Calu3 (cell line): ENCODE measurements at regions of chr4 and their contacts with region 1.

Region 1: GRCh38 chr4:113547487-113548042 is 214.0 kb downstream of the CAMK2D start:
- DNase-seq: peak; percentile 87
- H3K4me3 Mint-ChIP-seq: no peak overlapping the region
- H3K27ac Mint-ChIP-seq: peak overlapping the region; percentile 56
- H3K4me1 Mint-ChIP-seq: peaks cover 9% of the 10 kb centered on the region
- H3K27me3 Mint-ChIP-seq: no peaks in the 10 kb centered on the region
- CTCF ChIP-seq: peak; percentile 82

Region 2: DNA sequence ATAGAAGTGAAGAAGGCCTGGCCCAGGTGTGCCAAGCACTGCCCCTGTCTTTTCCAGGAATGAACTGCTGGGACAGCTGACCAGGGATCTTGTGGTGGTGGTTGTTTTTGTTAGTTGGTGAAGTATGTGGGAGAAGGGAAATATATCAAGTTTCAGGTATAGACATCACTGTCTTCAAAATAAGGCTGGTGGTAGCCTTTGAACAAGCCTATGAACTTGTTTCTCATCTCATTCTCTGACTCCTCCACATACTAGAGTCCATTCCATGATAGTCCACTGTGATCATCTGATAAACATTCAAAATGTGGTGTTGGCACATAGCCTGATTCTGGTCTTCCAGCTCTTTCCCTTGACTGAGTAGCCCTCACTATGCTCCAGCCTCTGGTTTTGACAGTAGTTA is 89.7 kb before region 1 on chr4:
- CTCF ChIA-PET with region 1: no interaction called
- intact Hi-C with region 1: no loop called
- DNase-seq: no peak
- H3K4me3 Mint-ChIP-seq: no peak overlapping the region
- H3K27ac Mint-ChIP-seq: no peak overlapping the region
- H3K4me1 Mint-ChIP-seq: no peaks in the 10 kb centered on the region
- H3K27me3 Mint-ChIP-seq: no peaks in the 10 kb centered on the region
- CTCF ChIP-seq: no peak

Region 3: GRCh38 chr4:113666386-113667114 is 119.0 kb after region 1 on chr4:
- CTCF ChIA-PET with region 1: no interaction called
- intact Hi-C with region 1: no loop called
- DNase-seq: no peak
- H3K4me3 Mint-ChIP-seq: no peak overlapping the region
- H3K27ac Mint-ChIP-seq: no peak overlapping the region
- H3K4me1 Mint-ChIP-seq: no peaks in the 10 kb centered on the region
- H3K27me3 Mint-ChIP-seq: no peaks in the 10 kb centered on the region
- CTCF ChIP-seq: no peak

Region 4: DNA sequence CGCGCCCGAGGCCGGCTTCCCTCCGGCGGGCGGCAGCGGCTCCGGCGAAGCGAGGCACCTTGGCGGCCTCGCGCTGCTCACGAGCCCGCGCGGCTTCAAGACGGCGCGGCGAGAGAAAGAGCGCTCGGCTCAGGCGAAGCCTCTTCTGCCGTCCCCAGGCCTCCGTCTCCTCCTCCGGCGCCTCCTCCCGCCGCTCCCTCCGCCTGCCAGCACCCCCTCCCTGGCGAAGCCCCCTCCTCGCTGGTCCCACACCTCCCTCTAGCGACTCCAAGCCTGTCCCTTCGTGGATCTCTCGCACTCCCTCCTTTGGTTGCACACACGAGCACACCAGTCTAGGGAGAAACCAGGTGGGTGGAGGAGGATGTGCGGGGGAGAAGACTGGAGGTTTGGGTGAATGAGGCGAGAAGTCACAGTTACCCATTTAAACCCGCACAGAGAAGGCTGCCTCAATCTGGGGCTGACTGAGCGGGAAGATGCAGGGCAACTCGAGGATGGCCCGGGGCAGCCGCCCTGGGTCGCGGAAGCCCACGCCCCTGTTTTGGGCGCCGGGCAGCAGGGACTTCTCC is 214.1 kb after region 1 on chr4 and contains the start of gene CAMK2D:
- CTCF ChIA-PET with region 1: interaction called, 6 read pairs
- intact Hi-C with region 1: loop called (anchors 1 kb)
- DNase-seq: peak; percentile 79
- H3K4me3 Mint-ChIP-seq: peak within 1 kb of the TSS; percentile 93
- H3K27ac Mint-ChIP-seq: peak within 1 kb of the TSS; percentile 99
- H3K4me1 Mint-ChIP-seq: peaks cover 30% of the 10 kb centered on the region
- H3K27me3 Mint-ChIP-seq: no peaks in the 10 kb centered on the region
- CTCF ChIP-seq: no peak
- total RNA-seq, gene CAMK2D: 22.1 and 28.3 TPM in 2 replicates